HepG2 (cell line): ENCODE measurements at regions of chr9 and their contacts with region 1.

Region 1: DNA sequence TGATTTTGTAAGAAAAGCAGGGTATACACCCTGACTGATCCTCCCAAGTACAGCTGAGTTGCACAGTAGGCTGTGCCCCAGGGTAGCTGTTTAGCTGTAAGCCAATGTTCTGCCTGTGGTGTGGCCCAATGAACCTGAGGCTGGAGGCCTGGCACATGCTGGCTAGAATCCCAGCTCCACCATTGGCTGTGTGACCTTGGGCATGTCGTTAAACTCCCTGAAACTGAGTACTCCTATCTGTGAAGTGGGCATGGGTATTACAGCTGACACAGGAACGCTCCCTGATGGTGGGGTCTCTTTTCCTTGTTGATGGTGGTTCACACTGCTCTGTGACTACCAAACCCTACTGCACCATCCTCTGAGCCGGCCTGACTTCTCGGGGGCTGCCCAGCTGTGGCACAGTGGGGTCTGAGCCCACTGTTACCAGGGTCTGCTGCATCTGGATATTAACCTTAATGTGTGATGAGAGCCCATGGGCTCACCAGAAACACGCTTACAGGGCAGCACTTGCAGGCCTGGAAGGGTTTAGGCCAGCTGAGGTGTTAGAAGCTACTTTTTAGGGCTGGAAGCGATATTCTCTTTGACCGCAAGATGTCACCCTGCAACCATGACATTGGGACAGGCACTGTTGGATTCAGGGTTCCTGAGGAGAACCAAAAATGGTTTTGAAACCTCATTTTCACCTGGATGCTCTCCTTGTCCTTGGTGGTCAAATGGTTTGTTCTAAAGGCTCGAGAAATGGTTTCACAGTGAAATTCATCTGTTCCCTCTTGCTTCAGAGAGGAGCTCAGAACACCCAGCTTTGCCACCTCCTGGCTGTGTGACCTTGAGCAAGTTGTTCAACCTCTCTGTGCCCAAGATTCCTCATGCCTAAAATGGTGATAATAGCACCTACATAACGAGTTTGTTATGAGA is 6.8 kb upstream of the GADD45G start:
- DNase-seq: peak; percentile 46
- ATAC-seq: peak; percentile 37; the same call in 2 of the 3 replicates
- H3K4me3 ChIP-seq: no peak overlapping the region
- H3K27ac ChIP-seq: no peak overlapping the region
- H3K4me1 ChIP-seq: peaks cover 9% of the 10 kb centered on the region
- H3K27me3 ChIP-seq: peaks cover 0 to 8% of the 10 kb centered on the region in 2 experiments; a peak in 2 of 5 replicates
- CTCF ChIP-seq: peak; percentile 87
- EP300 ChIP-seq: no peak
- POLR2A ChIP-seq: no peak
- RAD21 ChIP-seq: peak; percentile 80

Region 2: DNA sequence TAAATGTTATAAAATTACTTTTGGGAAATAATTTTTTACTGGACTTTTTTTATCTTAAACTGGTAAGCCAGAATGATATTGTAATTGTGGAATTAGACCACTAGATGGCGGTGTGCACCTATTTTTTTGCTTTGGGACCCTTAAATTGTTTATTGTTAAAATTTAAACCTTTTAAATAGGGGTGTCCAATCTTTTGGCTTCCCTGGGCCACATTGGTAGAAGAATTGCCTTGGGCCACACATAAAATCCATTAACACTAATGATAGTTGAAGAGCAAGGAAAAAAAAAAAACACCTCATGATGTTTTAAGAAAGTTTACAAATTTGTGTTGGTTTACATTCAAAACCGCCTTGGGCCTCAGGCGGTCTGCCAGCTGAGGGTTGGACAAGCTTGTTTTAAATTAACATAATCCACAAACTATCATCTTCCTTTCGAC is 21.5 kb before region 1 on chr9:
- CTCF ChIA-PET with region 1: interaction called, 18 read pairs
- POLR2A ChIA-PET with region 1: no interaction called
- in situ Hi-C with region 1: no loop called
- intact Hi-C with region 1: loop called (anchors 1 kb)
- DNase-seq: peak; percentile 32
- ATAC-seq: no peak
- H3K4me3 ChIP-seq: no peak overlapping the region
- H3K27ac ChIP-seq: no peak overlapping the region
- H3K4me1 ChIP-seq: no peaks in the 10 kb centered on the region
- H3K27me3 ChIP-seq: peaks cover 2 to 9% of the 10 kb centered on the region in 2 experiments; a peak in 2 of 5 replicates
- CTCF ChIP-seq: peak; percentile 47
- EP300 ChIP-seq: no peak
- POLR2A ChIP-seq: no peak
- RAD21 ChIP-seq: no peak

Region 3: GRCh38 chr9:89919169-89919681 is 321.3 kb after region 1 on chr9:
- CTCF ChIA-PET with region 1: interaction called, 4 read pairs
- POLR2A ChIA-PET with region 1: no interaction called
- in situ Hi-C with region 1: loop called (anchors 5 kb)
- intact Hi-C with region 1: loop called (anchors 1 kb)
- DNase-seq: peak; percentile 6
- ATAC-seq: peak; percentile 77
- H3K4me3 ChIP-seq: no peak overlapping the region
- H3K27ac ChIP-seq: no peak overlapping the region
- H3K4me1 ChIP-seq: peaks cover 10% of the 10 kb centered on the region
- H3K27me3 ChIP-seq: no peaks in the 10 kb centered on the region; a peak in 1 of 5 replicates
- CTCF ChIP-seq: peak; percentile 49
- EP300 ChIP-seq: no peak
- POLR2A ChIP-seq: no peak
- RAD21 ChIP-seq: no peak

Region 4: DNA sequence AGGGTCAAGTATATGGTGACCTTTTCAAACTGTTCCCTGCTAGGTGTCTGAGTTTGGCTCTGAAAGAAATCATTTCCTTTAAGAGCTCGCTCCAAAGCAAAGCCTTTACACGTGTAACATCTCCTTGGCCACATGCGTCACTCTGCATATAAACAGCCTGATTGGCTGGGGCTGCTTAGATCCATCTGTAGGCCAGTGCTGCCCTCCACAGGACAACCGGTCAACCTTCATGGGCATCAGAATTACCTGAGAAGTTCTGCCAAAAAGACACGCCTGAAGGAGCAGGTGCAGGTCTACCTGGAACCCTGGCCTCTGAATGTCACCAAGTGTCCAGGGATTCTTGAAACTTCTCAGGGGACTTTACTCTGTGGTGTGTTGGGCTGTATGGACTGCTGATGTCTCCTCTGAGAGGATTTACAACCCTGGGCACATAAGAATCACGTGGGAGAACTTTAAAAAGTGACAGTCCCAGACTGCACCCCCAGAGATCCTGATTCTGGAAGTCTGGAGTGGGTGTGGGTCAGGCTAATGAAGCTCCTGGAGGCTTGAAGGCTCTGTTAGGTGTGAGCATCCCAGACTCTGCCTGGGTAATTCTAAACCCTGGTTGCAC is 504.4 kb after region 1 on chr9:
- CTCF ChIA-PET with region 1: interaction called, 42 read pairs
- POLR2A ChIA-PET with region 1: no interaction called
- in situ Hi-C with region 1: loop called (anchors 5 kb)
- intact Hi-C with region 1: loop called (anchors 1 kb)
- DNase-seq: peak; percentile 71
- ATAC-seq: peak; percentile 98
- H3K4me3 ChIP-seq: no peak overlapping the region
- H3K27ac ChIP-seq: no peak overlapping the region
- H3K4me1 ChIP-seq: no peaks in the 10 kb centered on the region
- H3K27me3 ChIP-seq: no peaks in the 10 kb centered on the region
- CTCF ChIP-seq: peak; percentile 86
- EP300 ChIP-seq: no peak
- POLR2A ChIP-seq: no peak
- RAD21 ChIP-seq: peak; percentile 76

Region 5: DNA sequence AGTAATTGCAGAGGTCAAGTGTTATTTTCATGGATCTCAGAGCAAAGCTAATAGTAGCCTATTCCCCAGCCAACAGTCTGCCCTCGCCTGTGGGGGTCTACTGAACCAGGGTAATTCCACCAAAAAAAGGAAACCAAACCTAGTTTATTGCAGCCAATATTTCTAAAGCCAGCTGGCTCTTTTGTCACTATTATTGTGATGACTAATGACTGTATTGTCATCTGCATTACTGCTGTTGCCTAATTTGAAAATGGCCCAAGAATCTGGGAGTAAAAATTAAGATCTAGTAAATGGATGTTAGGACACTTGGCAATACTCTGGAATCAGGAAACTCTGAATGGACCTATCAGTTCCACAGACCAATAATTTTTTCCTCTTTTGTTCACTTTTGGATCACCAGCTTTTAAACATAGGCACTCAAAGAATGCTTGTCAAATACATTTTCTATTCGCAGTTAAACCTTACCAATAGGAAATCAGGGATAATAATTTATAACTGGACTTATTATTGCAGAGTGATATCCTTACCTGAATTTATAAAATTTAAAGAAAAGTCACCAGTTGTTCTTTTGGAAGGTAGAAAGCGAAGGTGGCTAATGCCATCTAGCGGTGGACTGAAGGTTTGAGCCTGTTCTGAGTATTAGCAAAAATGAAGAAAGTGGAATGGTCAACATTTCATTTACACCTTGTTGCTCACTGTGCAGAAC is 1272.8 kb after region 1 on chr9:
- CTCF ChIA-PET with region 1: interaction called, 4 read pairs
- POLR2A ChIA-PET with region 1: no interaction called
- in situ Hi-C with region 1: loop called (anchors 10 kb)
- intact Hi-C with region 1: no loop called
- DNase-seq: peak; percentile 25
- ATAC-seq: no peak
- H3K4me3 ChIP-seq: no peak overlapping the region
- H3K27ac ChIP-seq: no peak overlapping the region
- H3K4me1 ChIP-seq: no peaks in the 10 kb centered on the region
- H3K27me3 ChIP-seq: peaks cover 0 to 6% of the 10 kb centered on the region in 2 experiments; a peak in 1 of 5 replicates
- CTCF ChIP-seq: peak; percentile 71
- EP300 ChIP-seq: no peak
- POLR2A ChIP-seq: no peak
- RAD21 ChIP-seq: no peak